Activated CD8-positive, alpha-beta memory T cell treated with anti-CD3 and anti-CD28 coated beads, Interleukin-2, amount 10 ng/mL, durations not matched to agents 7 days and 5 days (primary cell): ENCODE measurements at regions of chr12 and their contacts with region 1.

Region 1: DNA sequence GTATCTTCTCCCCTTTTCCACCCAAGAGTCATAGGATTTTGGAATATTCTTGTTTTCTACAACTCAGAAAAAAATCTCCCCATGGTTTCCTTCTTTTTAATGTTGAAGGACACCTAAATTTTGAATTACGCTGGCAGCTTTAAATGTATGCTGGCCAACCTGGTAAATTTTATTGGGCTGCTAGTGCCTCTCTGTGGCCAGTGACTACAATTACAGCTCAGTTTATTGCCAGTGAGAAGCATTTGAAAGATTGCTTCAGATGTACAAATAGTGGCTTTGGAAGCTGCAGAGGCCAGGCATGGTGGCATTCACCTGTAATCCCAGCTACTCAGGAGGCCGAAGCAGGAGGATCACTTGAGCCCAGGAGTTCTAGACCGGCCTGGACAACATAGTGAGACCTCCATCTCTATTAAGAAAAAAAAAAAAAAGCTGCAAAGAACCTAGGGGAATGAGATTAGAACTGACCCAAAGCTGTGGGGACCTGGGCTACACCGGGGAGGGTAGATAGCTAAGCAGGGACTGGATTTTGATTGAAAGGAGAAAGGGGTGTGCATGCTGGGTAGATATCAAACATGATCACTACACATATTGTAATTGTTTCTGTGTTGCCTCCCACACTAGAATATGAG is 7.6 kb upstream of the RAB21 start:
- DNase-seq: peak; percentile 50
- ATAC-seq: peak; percentile 85
- H3K4me3 Mint-ChIP-seq: no peak overlapping the region
- H3K27ac Mint-ChIP-seq: no peak overlapping the region
- H3K4me1 Mint-ChIP-seq: no peaks in the 10 kb centered on the region
- H3K27me3 Mint-ChIP-seq: peaks cover 45% of the 10 kb centered on the region

Region 2: GRCh38 chr12:71415336-71416231 is 331.5 kb before region 1 on chr12:
- CTCF ChIA-PET with region 1: interaction called, 64 read pairs
- DNase-seq: no peak
- ATAC-seq: peak; percentile 55
- H3K4me3 Mint-ChIP-seq: no peak overlapping the region
- H3K27ac Mint-ChIP-seq: no peak overlapping the region
- H3K4me1 Mint-ChIP-seq: no peaks in the 10 kb centered on the region
- H3K27me3 Mint-ChIP-seq: peaks cover 5% of the 10 kb centered on the region

Region 3: DNA sequence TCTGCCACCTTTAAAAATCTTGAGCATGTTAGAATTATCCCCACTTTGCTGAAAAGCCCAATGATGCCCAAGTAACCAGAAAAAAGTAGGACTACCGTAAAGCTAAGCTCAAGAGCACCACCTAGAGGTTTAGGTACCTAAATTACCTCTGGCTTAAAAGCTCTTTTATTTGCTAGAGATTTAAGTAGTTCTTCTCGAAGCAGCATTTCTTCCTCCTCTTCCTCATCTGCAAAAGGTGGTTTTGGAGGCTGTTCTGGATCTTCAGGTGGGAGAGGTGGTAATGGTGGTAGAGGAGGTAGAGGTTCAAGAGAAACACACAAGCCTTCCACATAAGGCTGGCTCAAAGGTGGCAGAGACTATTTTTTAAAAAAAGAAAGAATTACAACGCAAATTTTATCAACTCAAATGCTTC is 110.4 kb before region 1 on chr12:
- CTCF ChIA-PET with region 1: interaction called, 19 read pairs
- DNase-seq: no peak
- ATAC-seq: peak; percentile 65
- H3K4me3 Mint-ChIP-seq: no peak overlapping the region
- H3K27ac Mint-ChIP-seq: peak overlapping the region; percentile 67
- H3K4me1 Mint-ChIP-seq: peaks cover 14% of the 10 kb centered on the region
- H3K27me3 Mint-ChIP-seq: no peaks in the 10 kb centered on the region

Region 4: GRCh38 chr12:71685914-71686665 is 61.0 kb before region 1 on chr12 and contains the start of gene TMEM19:
- CTCF ChIA-PET with region 1: interaction called, 25 read pairs
- DNase-seq: peak; percentile 88
- ATAC-seq: peak; percentile 96
- H3K4me3 Mint-ChIP-seq: peak within 1 kb of the TSS; percentile 93
- H3K27ac Mint-ChIP-seq: peak within 1 kb of the TSS; percentile 97
- H3K4me1 Mint-ChIP-seq: peaks cover 31% of the 10 kb centered on the region
- H3K27me3 Mint-ChIP-seq: no peaks in the 10 kb centered on the region
- total RNA-seq, gene TMEM19: 16.5 to 16.6 TPM